ENCODE measurements at regions of chr7 and their contacts with region 1.

Region 1: DNA sequence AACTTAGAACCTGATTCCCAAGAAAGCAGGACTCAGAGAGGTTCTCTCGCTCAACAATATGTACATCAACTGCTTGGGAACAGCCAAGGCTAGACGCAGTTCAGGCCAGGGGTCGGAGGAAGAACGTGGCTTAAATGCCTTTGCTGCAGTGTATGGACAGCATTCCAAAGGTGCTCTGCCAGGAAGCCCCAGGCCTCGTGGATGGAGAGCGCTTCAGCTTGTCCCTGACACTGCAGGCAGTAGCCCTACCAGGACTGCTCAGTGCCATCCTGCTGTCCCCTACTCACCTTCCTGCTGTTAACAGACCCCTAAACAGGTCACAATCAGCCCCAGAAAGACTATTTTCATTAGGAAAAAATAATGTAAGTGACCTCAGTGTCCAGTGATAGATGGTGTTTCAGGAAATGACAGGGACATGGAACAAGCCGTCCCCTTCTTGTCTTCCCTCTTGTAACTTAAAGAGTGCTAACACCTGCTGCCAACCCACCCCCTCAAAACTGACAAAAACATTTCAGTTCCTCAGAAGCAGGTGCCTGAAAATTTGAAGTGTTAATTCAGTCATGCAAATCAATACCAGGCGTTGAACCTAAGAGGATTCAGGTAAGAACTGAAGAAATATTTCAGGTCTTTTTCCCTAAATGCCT is 16.5 kb downstream of the CREB3L2 start:
- DNase-seq: no peak
- H3K4me3 ChIP-seq: no peak overlapping the region
- H3K27ac ChIP-seq: no peak overlapping the region
- H3K4me1 ChIP-seq: peaks cover 0 to 27% (median 12%) of the 10 kb centered on the region in 4 experiments
- H3K27me3 ChIP-seq: no peaks in the 10 kb centered on the region

Region 2: DNA sequence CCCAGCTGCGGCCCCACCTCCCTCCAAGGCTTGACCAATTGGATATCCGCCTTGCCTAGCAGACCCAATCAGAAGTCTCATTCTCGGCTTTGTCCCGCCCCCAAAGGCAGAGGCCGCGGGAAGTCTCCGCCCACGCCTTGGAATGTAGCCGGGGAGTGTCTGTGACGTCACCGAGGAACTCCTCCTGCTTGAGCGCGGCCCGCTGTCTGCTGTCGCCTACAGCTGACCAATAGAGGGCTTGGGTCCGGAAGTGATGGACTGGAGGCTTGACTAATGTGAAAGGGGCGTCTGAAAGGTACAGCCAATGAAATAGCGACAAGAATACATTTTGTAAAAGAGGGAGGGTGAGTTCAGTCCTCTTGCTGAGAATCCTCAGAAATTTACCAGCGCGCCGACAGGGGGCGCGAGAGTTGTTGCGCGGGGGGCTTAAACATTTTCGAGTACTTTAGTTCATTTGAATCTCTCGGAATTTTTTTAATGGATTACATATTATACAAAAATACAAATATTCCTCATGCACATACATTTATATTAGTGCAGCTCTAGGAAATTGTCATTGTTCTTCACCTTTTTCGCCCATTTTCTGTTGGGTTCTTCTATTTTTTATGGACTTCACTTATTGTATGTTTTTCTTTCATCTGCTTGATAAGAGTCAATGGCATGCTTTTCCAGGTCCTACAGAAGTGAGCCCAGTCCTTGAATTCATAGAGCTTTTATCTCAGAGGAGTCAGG is 16.9 kb after region 1 on chr7:
- CTCF ChIA-PET with region 1: interaction called, 10 read pairs
- POLR2A ChIA-PET with region 1: interaction called, 3 read pairs
- DNase-seq: peak; percentile 99 to 100 (median 100)
- H3K4me3 ChIP-seq: peak overlapping the region; percentile 82 to 99 (median 97)
- H3K27ac ChIP-seq: peak overlapping the region; percentile 87 to 94
- H3K4me1 ChIP-seq: peaks cover 12 to 59% (median 44%) of the 10 kb centered on the region in 4 experiments
- H3K27me3 ChIP-seq: no peaks in the 10 kb centered on the region